ENCODE measurements at regions of chr1 and their contacts with region 1.

Region 1: GRCh38 chr1:16055613-16056520 is 12.3 kb downstream of the CLCNKB start:
- DNase-seq: peak; percentile 77
- H3K4me3 Mint-ChIP-seq: no peak overlapping the region
- H3K27ac Mint-ChIP-seq: no peak overlapping the region
- H3K4me1 Mint-ChIP-seq: peaks cover 7% of the 10 kb centered on the region
- H3K27me3 Mint-ChIP-seq: peaks cover 3% of the 10 kb centered on the region

Region 2: DNA sequence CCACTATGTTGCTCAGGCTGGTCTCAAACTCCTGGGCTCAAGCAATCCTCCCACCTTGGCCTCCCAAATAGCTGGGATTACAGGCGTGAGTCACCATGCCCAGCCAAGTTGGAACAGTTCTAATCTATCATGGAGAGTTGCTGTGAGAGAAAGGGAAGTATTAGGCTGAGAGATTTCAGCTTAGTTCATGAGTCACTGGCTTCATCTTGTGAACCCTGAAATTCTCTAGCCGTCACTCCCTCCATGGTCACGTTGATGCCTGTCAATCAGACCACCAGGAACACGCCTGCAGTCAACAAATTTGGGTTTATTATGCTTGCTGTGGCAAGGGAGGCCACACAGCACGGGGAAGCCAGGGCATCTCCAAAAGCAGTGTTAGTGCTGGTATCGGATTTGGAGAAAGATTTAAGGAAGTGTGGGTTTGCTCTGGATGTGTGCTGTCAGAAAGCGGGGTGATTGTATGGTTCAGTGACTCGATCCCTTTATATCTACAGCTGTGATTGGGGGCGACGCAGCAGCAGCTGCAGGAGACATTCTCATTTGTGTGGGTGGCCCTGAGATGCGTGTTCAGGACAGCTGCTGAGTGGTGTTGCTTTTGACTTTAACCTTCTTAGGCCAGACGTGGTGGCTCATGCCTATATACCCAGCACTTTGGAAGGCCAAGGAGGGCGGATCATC is 267.1 kb before region 1 on chr1:
- intact Hi-C with region 1: loop called (anchors 1 kb)
- DNase-seq: no peak
- H3K4me3 Mint-ChIP-seq: no peak overlapping the region
- H3K27ac Mint-ChIP-seq: no peak overlapping the region
- H3K4me1 Mint-ChIP-seq: no peaks in the 10 kb centered on the region
- H3K27me3 Mint-ChIP-seq: peaks cover 7% of the 10 kb centered on the region

Region 3: DNA sequence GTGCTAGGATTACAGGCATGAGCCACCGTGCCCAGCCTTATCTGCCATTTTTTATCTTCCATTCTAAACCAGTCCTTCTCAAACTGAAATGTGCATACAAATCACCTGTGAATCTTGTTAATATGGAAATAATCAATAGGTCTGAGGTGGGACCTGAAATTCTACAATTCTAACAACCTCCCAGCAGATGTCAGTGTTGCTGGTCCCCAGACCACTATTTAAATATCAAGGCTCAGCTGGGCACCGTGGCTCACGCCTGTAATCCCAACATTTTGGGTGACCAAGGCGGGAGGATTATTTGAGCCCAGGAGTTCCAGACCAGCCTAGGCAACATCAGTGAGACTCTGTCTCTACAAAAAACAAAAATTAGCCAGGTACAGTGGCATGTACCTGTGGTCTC is 252.5 kb before region 1 on chr1:
- intact Hi-C with region 1: loop called (anchors 1 kb)
- DNase-seq: no peak
- H3K4me3 Mint-ChIP-seq: no peak overlapping the region
- H3K27ac Mint-ChIP-seq: no peak overlapping the region
- H3K4me1 Mint-ChIP-seq: peaks cover 4% of the 10 kb centered on the region
- H3K27me3 Mint-ChIP-seq: peaks cover 15% of the 10 kb centered on the region

Region 4: GRCh38 chr1:15820478-15820877 is 235.4 kb before region 1 on chr1:
- intact Hi-C with region 1: loop called (anchors 1 kb)
- DNase-seq: no peak
- H3K4me3 Mint-ChIP-seq: no peak overlapping the region
- H3K27ac Mint-ChIP-seq: no peak overlapping the region
- H3K4me1 Mint-ChIP-seq: peaks cover 10% of the 10 kb centered on the region
- H3K27me3 Mint-ChIP-seq: no peaks in the 10 kb centered on the region

Region 5: DNA sequence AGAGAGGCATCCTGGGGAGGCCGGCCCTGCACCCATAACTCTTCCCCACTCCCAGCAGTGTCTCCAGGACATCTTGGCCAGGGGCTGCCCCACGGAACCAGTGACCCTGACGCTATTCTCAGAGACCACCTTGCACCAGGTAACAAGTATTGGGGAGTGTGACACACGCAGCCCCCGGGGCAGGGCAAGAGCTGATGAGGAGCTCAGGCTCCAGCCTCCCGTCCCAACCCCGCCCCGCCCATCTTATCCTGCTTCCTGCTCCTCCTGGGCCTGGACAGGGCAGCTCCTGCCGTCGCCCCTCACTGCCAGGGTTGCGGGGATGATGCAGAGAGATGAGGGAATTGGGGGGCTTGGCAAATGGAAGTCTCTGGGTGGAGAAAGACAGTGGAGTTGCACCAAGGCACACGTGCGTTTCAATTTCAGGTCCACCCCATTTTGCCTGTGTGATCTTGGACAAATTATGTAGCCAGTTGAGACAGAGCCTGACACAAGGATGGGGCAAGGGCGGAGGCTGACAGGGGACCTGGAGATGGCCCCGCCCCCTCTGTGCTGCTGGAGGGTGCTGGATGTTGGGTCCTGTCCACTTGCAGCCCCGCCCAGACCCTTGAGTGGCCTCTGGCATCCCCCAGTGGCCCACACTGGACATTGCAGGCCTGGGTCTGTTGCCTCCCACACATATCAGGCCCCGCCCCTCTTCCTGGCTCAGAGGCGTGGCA is 23.3 kb before region 1 on chr1:
- intact Hi-C with region 1: loop called (anchors 1 kb)
- DNase-seq: peak; percentile 33
- H3K4me3 Mint-ChIP-seq: no peak overlapping the region
- H3K27ac Mint-ChIP-seq: no peak overlapping the region
- H3K4me1 Mint-ChIP-seq: no peaks in the 10 kb centered on the region
- H3K27me3 Mint-ChIP-seq: peaks cover 9% of the 10 kb centered on the region

Measured in activated T-helper 1 cell treated with anti-CD3 and anti-CD28 coated beads, Interleukin-12 subunit alpha, Interleukin-12 subunit beta, Interleukin-2, Interleukin-4 antibody, amounts not matched to agents 30 ng/mL and 10 ng/mL and 1 ng/mL, durations not matched to agents 14 hours and 24 hours and 36 hours (primary cell).